ENCODE measurements at regions of chr11 and their contacts with region 1.

Region 1: DNA sequence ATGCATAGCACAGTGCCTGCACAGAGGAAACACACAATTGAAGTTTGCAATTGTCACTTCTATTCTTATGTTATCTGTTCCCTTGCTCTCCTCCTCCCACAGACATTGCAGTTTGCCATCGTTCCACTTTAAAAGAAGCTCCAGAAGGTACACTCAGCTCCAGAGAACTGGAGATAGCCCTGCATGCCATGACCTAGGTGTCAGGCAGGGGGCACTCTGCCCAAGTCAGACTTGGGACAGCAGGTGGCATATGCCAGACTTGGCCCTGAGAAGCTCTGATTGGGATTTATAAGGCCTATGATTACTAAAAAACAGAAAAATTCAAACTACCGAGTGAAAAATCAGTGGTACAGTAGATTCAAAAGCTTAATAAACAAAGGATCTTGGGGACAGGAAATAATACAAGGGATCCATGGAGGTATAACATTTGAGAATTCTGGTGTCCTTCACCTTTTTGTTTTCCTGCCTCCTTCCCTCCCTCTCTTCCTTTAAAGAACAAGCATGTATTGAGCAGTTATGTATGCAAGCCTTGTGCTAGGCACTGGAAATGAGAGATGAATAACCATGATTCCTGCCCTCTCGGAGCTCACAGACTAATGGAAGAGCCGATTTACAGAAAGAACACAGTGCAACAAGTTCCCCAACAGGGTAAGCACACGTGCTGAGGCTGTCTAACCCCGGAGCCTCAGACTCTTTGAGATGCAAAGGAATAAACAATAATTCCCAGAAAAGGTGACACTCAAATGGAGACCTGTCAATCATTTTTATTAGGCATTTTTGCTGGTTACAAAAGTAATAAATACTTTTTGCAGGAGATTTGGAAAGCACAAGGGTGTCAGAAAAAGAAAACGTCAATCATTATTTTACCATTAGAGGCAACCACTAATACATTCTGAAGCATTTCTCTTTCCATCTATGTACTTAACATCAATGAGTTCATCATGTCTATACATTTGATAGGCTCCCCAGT is 39.8 kb downstream of the TENM4 start:
- DNase-seq: no peak
- H3K4me3 ChIP-seq: no peak overlapping the region
- H3K27me3 ChIP-seq: no peaks in the 10 kb centered on the region; the same call in 1 of the 2 replicates
- CTCF ChIP-seq: peak; percentile 79

Region 2: GRCh38 chr11:79329561-79329960 is 71.4 kb before region 1 on chr11:
- CTCF ChIA-PET with region 1: no interaction called
- POLR2A ChIA-PET with region 1: no interaction called
- DNase-seq: no peak
- H3K4me3 ChIP-seq: no peak overlapping the region
- H3K27me3 ChIP-seq: no peaks in the 10 kb centered on the region
- CTCF ChIP-seq: no peak

Region 3: DNA sequence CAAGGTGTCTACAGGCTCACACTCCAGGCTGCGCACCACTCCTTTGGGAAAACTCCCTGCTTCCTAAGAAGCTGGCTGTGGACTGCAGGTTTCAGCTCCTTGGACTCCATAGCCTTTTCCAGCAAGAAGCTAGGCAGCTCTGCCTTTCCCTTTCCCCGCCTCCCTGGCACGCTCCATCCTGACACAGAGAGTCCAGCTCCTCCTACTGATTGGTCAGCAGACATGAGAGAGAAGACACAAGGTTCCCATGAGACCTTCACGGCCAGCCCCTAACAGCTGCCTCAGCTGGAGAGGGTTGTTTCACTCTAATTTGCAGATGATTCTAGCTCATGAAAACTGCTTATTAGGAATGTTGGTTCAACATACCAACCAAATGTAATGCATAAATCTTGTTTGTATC is 12.3 kb after region 1 on chr11:
- CTCF ChIA-PET with region 1: interaction called, 27 read pairs
- POLR2A ChIA-PET with region 1: interaction called, 6 read pairs
- DNase-seq: peak; percentile 79
- H3K4me3 ChIP-seq: no peak overlapping the region
- H3K27me3 ChIP-seq: no peaks in the 10 kb centered on the region
- CTCF ChIP-seq: 0 out of 2 replicates have a peak, but pooled peaks have one; percentile 9

Region 4: DNA sequence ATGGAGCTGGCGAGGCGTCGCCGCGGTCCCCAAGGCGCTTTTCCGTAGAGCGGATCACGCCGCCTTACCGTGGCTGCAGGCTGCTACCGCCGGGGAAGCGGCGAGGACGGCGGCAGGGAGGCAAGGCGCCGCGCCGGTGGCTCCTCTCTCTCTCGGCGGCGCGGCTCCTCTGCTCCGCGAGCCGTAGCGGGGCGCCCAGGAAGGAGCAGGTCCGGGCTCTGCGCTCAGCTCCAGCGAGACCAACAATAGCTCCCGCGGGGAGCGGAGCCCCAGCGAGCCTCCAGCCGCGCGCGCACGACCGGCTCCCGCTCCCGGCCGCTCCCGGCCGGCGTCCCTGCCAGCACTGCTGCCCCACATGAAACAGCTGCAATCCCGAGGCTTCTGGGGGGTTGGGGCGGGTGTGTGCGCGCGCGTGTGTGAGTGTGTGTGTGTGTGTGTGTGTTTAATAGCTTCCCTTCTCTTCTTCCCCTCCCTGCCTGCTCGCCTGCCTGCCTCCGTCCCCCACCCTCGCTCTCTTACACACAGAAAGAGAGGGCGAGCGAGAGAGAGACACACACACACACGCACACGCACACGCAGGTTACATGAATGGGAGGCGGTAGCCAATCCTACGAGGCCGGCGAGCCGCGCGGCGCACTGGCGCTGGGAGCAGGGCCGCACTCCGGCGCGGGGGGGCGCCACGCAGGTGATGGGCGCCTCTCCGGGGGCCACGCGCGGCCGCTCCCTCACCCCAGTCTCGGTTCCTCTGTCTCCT is 39.6 kb after region 1 on chr11 and contains the start of gene TENM4:
- CTCF ChIA-PET with region 1: interaction called, 15 read pairs
- POLR2A ChIA-PET with region 1: no interaction called
- DNase-seq: no peak
- H3K4me3 ChIP-seq: peak within 1 kb of the TSS; percentile 61
- H3K27me3 ChIP-seq: peaks cover 2% of the 10 kb centered on the region
- CTCF ChIP-seq: no peak
- polyA plus RNA-seq, gene TENM4: 0.36 and 0.39 TPM in 2 replicates

Region 5: GRCh38 chr11:79783833-79784232 is 382.8 kb after region 1 on chr11:
- CTCF ChIA-PET with region 1: no interaction called
- POLR2A ChIA-PET with region 1: no interaction called
- DNase-seq: no peak
- H3K4me3 ChIP-seq: no peak overlapping the region
- H3K27me3 ChIP-seq: no peaks in the 10 kb centered on the region
- CTCF ChIP-seq: no peak

Measured in BJ (cell line).